Pancreas (tissue), 10 donors: ENCODE measurements at regions of chr1 and their contacts with region 1.

Region 1: DNA sequence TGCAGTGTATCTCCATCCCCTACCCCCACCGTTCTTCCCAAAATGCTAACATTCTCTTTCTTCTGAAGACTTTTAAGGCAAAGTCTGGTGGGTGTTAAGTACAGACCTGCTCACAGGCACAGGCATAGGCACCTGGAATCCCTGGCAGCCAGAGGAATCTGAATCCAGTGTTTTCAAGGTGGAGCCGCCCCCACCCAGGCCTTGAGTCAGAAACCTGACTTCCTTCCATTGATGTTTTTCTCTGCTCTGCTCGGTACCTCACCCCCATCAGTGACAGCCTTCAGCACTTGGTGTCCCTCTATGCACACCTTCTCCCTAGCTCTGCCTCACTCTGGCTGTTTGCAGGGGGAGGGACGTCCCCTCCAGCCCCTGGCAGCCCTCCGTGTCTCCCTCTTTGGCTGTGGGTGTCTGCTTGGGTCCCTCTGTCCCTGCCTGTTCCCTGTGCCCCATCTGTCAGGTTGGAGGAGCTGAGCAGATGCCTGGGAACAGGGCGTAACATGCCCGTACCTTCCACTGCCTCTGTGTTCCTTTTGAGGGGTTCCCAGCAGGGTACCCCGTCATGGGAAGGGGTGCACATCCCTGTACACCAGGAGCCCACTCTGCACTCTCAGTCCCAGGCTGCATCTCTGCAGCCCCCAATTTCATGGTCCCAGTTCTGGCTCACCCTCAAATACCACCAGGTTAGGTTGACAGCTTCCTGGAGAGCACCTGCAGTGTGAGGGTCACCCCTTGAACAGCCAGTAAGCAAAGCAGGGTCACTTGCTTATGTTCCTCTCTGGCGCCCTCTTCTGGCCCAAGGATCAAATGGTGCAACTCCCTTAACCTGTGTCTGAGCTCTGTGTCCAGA is 6.7 kb downstream of the NCDN start:
- DNase-seq: peak; percentile 61 to 88 (median 81)
- ATAC-seq: peak; percentile 38 to 68 (median 62)
- H3K4me3 ChIP-seq: no peak overlapping the region
- H3K27ac ChIP-seq: no peak overlapping the region
- H3K4me1 ChIP-seq: no peaks in the 10 kb centered on the region
- H3K27me3 ChIP-seq: no peaks in the 10 kb centered on the region
- CTCF ChIP-seq: peak; percentile 56 to 73 (median 67)

Region 2: DNA sequence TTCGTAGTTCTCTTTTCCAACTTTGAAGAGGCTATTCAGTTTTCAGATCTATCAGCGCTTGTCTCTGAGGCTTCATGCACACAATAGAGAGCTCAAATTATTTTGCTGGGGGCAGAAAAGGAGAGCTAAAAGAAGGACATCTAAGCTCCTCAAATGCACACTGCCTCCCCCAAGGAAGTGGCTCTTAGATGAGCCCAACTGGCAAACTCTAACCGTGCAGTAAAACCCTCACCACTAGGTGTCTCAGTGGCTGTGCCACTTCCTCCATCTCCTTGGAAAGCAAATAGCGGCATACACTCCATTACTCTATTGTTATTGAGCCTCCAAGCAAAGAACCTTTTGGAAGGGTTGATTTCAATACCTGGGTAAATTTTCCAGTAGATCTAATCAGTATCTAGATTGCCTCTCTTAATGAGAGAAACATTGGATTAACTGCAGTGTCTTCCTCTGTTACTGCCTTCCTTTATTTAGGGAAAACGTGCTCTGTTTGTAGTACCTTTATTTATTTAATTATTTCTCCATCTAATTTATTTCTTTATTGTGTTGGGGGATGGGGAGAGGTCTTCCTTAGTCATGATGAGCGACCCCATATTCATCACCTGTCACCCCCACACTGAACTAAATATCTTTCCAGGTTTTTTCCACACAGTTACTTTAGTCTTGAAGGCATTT is 362.1 kb before region 1 on chr1:
- intact Hi-C with region 1: loop called in 1 of 3 experiments (anchors 5 kb)
- DNase-seq: peak in 4 of 6 donors; percentile 52 to 79 (median 56)
- ATAC-seq: peak; percentile 97 to 100 (median 100)
- H3K4me3 ChIP-seq: no peak overlapping the region
- H3K27ac ChIP-seq: no peak overlapping the region
- H3K4me1 ChIP-seq: no peaks in the 10 kb centered on the region
- H3K27me3 ChIP-seq: no peaks in the 10 kb centered on the region
- CTCF ChIP-seq: peak; percentile 64 to 86 (median 74)

Region 3: GRCh38 chr1:35451125-35451528 is 113.1 kb before region 1 on chr1:
- intact Hi-C with region 1: loop called in 2 of 3 experiments (anchors 5 kb)
- DNase-seq: peak; percentile 74 to 92 (median 86)
- ATAC-seq: peak; percentile 66 to 89 (median 84)
- H3K4me3 ChIP-seq: no peak overlapping the region
- H3K27ac ChIP-seq: no peak overlapping the region
- H3K4me1 ChIP-seq: peaks cover 29 to 61% (median 39%) of the 10 kb centered on the region in 3 donors
- H3K27me3 ChIP-seq: no peaks in the 10 kb centered on the region
- CTCF ChIP-seq: peak; percentile 61 to 76 (median 73)

Region 4: DNA sequence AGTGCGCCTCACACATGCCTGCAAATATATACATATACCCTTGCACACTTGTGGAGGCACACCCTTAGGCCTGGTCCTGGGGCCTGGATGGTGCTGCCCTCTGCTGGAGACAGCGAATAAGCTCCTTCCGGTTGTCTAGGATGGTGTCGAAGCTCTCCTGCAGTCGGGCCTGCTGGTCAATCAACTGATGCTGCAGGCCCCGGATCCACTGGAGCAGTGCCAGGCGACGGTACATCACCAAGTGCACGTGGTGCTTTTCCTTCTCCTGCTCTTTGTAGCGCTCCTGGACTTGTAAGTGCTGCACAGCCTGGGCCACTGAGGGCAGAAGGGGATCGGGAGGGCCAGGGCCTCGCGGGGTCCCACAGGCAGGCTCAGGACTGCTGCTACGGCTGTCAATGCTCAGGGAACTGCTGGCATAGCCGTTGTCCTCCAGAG is 151.3 kb after region 1 on chr1:
- intact Hi-C with region 1: loop called in 2 of 3 experiments (anchors 5 kb)
- DNase-seq: peak; percentile 49 to 87 (median 76)
- ATAC-seq: peak; percentile 57 to 72 (median 71)
- H3K4me3 ChIP-seq: no peak overlapping the region
- H3K27ac ChIP-seq: no peak overlapping the region
- H3K4me1 ChIP-seq: no peaks in the 10 kb centered on the region
- H3K27me3 ChIP-seq: no peaks in the 10 kb centered on the region
- CTCF ChIP-seq: peak; percentile 52 to 80 (median 74)

Region 5: DNA sequence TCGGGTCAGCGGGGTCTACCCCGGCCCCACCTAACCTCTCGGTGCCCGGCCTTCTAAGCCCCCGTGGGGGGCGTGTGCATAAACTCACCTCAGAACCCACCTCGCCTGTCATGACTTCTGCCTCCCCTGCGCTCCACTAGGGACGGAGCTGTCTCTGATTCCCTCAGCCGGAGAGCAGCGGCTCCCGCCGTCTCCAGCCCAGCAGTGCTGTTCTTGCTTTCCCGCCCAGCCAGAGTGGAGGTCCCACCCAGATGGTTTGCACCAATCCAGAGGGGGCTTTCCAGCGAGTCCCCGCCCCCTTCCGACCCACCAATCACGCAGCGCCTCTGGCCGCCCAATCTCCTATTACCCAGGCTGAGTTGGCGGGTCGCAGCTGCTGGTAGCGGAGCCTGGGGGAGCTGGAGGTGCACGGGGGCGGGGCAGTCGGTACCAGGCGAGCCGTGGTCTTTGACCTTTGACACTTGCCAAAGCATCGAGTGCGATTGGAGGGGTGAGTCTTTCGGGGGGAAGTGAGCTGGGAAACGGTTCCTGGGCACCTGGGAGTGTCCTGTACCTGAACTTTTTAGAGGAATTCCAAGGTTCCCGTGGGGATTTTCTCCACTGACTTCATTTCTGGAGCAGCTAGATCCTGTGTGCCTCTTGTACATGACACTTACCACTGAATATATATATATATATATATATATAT is 205.6 kb after region 1 on chr1 and contains the start of gene CLSPN:
- intact Hi-C with region 1: loop called in 1 of 3 experiments (anchors 5 kb)
- DNase-seq: peak; percentile 92 to 97 (median 95)
- ATAC-seq: peak; percentile 96 to 99 (median 98)
- H3K4me3 ChIP-seq: peak within 1 kb of the TSS; percentile 72 to 89 (median 88)
- H3K27ac ChIP-seq: peak within 1 kb of the TSS; percentile 43 to 82 (median 74)
- H3K4me1 ChIP-seq: peaks cover 0 to 5% (median 0%) of the 10 kb centered on the region in 3 donors
- H3K27me3 ChIP-seq: no peaks in the 10 kb centered on the region
- CTCF ChIP-seq: no peak
- total RNA-seq, gene CLSPN: 0.12 to 1.00 (median 0.49) TPM in 5 of 6 donors, not detected in the other